Mammary epithelial cell (primary cell): ENCODE measurements at regions of chr20 and their contacts with region 1.

Region 1: DNA sequence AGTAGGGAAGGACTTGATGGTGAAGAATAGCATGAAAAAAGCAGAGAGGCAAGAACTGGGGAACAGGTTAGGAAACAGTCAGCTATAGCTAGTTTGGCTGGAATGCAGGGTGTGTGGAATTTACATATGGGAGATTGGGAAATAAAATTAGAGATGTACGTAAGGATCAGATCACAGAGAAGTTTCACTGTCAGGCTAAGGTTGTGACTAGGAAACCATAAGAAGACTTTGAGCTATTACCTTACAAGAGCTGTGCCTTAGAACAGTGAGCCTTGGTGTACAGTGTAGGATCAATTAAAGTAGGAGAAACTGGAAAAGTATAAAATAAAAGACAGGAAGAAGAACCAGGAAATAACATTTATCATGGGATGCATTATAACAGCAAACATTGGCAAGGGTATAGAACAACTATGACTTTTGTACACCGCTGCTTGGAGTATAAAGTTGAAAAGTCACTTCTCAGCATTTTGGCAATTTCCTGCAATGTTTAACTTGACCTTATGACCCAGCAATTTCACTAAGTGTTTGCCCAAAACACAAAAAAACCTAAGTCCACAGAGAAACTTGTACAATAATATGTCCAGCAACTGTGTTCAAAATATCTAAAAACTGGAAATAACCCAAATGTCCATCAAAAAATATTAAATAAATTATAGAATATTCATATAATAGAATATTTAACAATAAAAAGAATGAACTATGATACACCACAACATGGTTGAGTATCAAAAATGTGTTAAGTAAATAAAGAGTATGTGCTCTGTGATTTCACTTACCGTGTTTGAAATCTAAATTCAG is 31.2 kb upstream of the SPTLC3 start:
- DNase-seq: no peak
- H3K4me3 ChIP-seq: no peak overlapping the region
- H3K27ac ChIP-seq: no peak overlapping the region
- H3K4me1 ChIP-seq: no peaks in the 10 kb centered on the region
- H3K27me3 ChIP-seq: no peaks in the 10 kb centered on the region
- CTCF ChIP-seq: no peak

Region 2: DNA sequence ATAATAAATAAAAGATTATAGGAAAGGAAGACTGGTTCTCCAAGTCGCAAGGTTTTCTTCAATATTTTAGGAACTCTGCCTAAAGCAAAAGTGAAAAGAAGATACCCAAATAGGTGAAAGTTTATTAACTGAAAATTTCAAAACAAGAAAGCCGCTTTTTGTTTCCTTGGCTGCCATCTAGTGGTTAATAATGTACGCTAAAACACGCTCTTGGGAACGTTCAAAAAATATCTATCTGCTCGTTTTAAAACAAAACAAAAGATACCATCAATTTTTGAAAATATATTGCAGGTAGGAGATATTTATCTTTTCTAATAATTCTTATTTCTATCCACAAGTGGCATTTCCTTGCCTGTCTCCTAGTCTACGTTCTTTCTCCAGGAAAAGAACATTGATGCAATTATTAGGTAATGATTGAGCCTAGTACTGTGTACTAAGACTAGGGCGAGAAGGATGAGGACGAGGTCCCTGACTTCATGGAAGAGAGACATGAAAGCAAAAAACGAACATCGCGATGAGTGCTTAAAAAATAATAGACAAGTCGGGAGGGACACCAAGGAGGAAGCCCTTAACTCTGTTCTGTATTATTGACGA is 128.4 kb after region 1 on chr20:
- CTCF ChIA-PET with region 1: no interaction called
- dilution Hi-C with region 1: no loop called
- in situ Hi-C with region 1: loop called in 1 of 2 experiments (anchors 5 kb)
- intact Hi-C with region 1: no loop called
- DNase-seq: peak; percentile 12
- H3K4me3 ChIP-seq: no peak overlapping the region
- H3K27ac ChIP-seq: no peak overlapping the region
- H3K4me1 ChIP-seq: peaks cover 3% of the 10 kb centered on the region
- H3K27me3 ChIP-seq: no peaks in the 10 kb centered on the region
- CTCF ChIP-seq: peak; percentile 62 to 65